ENCODE measurements at regions of chr7 and their contacts with region 1.

Region 1: DNA sequence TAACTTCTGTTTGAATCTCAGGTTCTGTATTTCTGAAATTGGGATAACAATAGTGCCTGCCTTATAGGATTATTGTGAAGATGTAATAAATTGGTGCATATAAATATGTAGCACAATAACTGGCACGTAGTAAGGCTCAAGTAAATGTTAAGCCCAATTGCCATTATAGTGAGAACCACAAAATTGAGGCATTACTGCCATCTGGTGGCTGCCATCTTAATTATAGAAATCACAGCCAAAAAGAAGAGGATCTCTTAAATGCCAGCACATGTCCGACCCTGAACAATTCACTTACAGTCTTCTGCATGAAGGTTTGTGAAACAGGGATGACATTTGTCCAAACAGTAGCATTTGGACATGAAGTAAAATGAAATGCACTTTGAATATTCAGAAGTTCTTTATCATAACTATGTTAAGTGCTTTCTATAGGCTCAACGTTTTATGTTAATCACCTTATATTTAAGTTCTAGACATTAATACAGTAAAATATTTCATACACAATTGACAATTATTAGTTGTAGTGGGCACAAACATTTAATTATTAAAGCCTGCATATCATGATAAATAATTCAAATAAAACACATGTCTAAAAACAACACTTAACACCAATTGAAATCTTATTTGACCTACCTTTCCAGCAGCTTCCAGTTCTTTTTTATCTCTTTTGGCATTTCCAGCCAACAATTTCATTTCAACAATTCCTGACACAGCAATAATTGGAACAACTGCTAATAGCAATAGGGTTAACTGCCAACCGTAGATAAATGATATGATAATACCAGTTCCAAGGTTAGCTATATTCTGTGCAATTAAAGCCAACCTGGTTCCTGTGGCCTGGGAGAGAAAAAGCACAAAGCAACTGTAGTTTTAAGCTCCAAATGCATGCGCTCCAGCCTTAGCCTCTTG is 58.5 kb downstream of the ABCB4 start:
- DNase-seq: peak; percentile 47
- ATAC-seq: peak; percentile 56 to 82

Region 2: DNA sequence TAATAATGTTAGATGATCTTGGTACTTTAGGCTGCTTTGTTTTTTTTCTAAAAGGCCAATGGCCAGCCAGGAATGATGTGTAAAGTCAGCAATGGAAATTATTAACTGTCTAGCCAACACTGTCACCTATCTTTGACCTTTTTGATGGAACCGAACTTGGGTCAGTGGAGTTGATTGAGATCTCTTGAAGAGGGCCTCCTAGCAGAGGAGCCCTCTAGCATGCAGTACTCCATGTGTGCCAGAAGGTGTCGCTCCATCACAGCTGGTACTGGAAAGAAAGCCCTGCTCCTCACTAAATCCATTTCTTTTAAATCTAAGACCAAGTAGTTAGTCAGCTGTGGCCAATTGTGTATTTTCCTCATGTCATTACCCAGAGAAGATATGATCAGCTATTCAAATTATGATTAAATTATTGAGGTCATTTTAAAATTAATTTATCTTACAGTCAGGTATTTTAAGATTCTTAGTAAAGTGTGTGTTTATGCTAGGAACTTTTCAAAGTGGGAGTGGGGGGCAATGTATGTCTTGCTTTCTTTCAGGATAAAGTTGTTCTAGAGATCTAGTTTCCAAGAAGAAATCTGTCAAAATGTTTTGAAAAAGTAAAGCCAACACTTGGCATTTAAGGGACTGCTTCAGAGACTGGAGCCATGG is 104.6 kb before region 1 on chr7:
- intact Hi-C with region 1: loop called (anchors 2 to 5 kb)
- DNase-seq: peak; percentile 43
- ATAC-seq: peak; percentile 78 to 81

Region 3: GRCh38 chr7:87574630-87575029 is 157.7 kb after region 1 on chr7:
- intact Hi-C with region 1: no loop called
- DNase-seq: no peak
- ATAC-seq: peak in 1 of 2 donors; percentile 97

Region 4: GRCh38 chr7:87687653-87688254 is 270.8 kb after region 1 on chr7:
- intact Hi-C with region 1: no loop called
- DNase-seq: no peak
- ATAC-seq: no peak

Measured in left cardiac atrium (tissue), 4 donors.